ENCODE measurements at regions of chr2 and their contacts with region 1.

Region 1: DNA sequence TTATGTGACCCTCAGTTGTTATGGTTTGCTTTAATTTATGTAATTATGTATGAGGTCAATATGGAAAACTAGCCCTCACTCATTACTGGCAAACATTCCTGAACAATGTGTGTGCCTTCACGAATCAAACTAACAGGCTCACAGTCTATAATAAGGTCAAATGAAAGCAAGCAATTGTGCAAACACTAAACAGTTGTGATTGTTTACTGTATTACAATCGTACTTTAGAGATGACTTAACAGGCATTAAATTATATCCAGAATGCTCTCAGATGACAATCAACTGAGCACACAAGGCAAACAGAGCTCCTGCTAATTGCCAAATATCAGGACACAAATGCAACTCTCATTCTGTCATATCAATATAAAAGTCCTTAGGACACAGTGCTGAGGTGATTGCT is 29.5 kb downstream of the COL5A2 start:
- DNase-seq: peak; percentile 60
- ATAC-seq: peak; percentile 80
- H3K4me3 ChIP-seq: no peak overlapping the region
- H3K27ac ChIP-seq: peak overlapping the region; percentile 26
- H3K4me1 ChIP-seq: peaks cover 19% of the 10 kb centered on the region
- H3K27me3 ChIP-seq: no peaks in the 10 kb centered on the region
- CTCF ChIP-seq: no peak

Region 2: GRCh38 chr2:188978291-188979081 is 171.5 kb before region 1 on chr2:
- CTCF ChIA-PET with region 1: no interaction called
- POLR2A ChIA-PET with region 1: no interaction called
- intact Hi-C with region 1: no loop called
- DNase-seq: peak; percentile 49
- ATAC-seq: peak; percentile 75
- H3K4me3 ChIP-seq: no peak overlapping the region
- H3K27ac ChIP-seq: no peak overlapping the region
- H3K4me1 ChIP-seq: peaks cover 12% of the 10 kb centered on the region; the same call in 1 of the 2 replicates
- H3K27me3 ChIP-seq: no peaks in the 10 kb centered on the region
- CTCF ChIP-seq: peak; percentile 78

Region 3: GRCh38 chr2:189124175-189124574 is 25.9 kb before region 1 on chr2:
- CTCF ChIA-PET with region 1: no interaction called
- POLR2A ChIA-PET with region 1: no interaction called
- intact Hi-C with region 1: loop called (anchors 2 kb)
- DNase-seq: peak; percentile 88
- ATAC-seq: peak; percentile 85
- H3K4me3 ChIP-seq: peak overlapping the region; percentile 22
- H3K27ac ChIP-seq: peak overlapping the region; percentile 91
- H3K4me1 ChIP-seq: peaks cover 49% of the 10 kb centered on the region
- H3K27me3 ChIP-seq: no peaks in the 10 kb centered on the region
- CTCF ChIP-seq: no peak

Region 4: DNA sequence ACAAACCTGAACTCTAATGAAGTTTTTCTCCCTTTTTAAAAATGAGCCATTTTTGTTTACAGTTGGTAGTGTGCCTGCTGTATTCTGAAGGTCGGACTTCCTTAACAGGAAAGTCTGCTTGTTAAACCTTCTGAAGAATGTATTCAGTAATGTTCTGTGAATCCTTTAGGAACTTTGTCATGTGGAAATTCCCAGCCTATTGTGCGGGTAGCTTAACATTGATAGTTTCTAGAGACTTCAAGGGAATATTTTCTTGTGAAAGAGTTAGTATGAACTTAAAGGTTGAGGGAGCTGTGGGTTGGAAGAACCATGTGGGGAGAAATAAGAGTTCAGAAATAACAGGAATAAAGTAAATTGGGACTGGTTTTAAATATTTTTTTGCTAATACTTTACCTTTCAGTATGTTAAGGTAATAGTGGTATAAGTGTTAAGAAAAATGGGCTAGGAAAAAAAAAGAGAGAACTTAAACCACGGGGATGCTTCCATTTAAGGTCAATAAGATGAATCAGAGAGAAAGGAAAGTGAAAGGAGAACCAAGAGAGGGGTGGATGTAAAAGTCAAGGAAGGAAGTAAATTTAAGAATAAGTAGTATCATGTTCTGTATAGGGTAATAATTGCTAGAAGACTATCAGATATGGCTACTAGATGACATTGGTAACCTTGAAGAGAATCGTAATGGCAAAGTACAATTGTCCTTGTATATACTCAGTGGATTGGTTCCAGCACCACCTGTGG is 724.7 kb after region 1 on chr2:
- CTCF ChIA-PET with region 1: no interaction called
- POLR2A ChIA-PET with region 1: no interaction called
- intact Hi-C with region 1: no loop called
- DNase-seq: no peak
- ATAC-seq: no peak
- H3K4me3 ChIP-seq: no peak overlapping the region
- H3K27ac ChIP-seq: no peak overlapping the region
- H3K4me1 ChIP-seq: no peaks in the 10 kb centered on the region
- H3K27me3 ChIP-seq: no peaks in the 10 kb centered on the region
- CTCF ChIP-seq: no peak